Caco-2 (cell line): ENCODE measurements at regions of chr13 and their contacts with region 1.

Region 1: DNA sequence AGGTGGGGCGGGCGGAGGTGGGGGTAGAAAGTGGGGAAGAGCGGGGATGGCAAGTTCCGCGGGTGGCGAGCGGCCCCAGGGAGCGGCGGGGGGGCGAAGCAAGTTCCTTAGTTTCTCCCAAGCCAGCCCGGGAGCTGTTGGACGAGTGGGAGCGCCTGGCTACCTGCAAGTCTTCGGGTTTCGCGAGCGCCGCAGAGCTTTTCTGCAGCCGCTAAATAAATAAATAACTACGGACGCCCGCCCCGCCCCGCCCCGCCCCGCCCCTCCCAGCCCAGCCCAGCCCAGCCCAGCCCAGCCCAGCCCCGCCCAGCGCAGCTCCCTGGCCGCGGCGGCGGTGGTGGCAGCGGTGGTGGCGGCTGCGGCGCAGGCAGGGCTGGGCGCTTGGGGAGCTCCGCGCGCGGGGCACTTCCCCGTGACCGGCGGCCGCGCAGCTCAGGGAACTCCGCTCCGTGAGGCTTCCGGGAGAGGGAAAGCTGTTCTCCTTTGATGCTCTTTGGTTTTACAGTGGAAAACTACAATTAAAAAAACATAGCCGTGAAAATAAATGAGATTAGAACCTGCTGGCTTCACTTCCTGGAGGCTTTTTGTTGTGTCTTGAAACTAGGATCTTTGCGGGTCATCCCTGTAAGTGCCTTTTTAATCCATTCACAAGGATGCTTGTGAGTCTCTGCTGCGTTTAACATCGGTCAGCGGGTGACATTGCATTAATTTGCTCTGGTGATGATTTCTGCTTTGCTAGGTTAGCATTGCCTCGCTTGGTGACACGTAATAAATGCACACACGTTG is at the start of gene UBE2L5:
- DNase-seq: peak; percentile 88
- H3K4me3 ChIP-seq: peak within 1 kb of the TSS; percentile 58
- H3K4me3 Mint-ChIP-seq: peak within 1 kb of the TSS; percentile 72
- H3K27ac Mint-ChIP-seq: peak within 1 kb of the TSS; percentile 16
- H3K4me1 ChIP-seq: peaks cover 7% of the 10 kb centered on the region; the same call in 1 of the 2 replicates
- H3K4me1 Mint-ChIP-seq: peaks cover 8% of the 10 kb centered on the region
- H3K27me3 ChIP-seq: no peaks in the 10 kb centered on the region
- H3K27me3 Mint-ChIP-seq: no peaks in the 10 kb centered on the region
- CTCF ChIP-seq: no peak
- total RNA-seq, gene UBE2L5: not detected in 2 replicates

Region 2: GRCh38 chr13:30395192-30396084 is 26.8 kb before region 1 on chr13:
- CTCF ChIA-PET with region 1: no interaction called
- POLR2A ChIA-PET with region 1: interaction called, 5 read pairs
- intact Hi-C with region 1: loop called (anchors 1 kb)
- DNase-seq: peak; percentile 89 to 94
- H3K4me3 ChIP-seq: peak overlapping the region; percentile 45
- H3K4me3 Mint-ChIP-seq: peak overlapping the region; percentile 93
- H3K27ac Mint-ChIP-seq: peak overlapping the region; percentile 92
- H3K4me1 ChIP-seq: peaks cover 10% of the 10 kb centered on the region
- H3K4me1 Mint-ChIP-seq: no peaks in the 10 kb centered on the region
- H3K27me3 ChIP-seq: no peaks in the 10 kb centered on the region
- H3K27me3 Mint-ChIP-seq: no peaks in the 10 kb centered on the region
- CTCF ChIP-seq: no peak

Region 3: GRCh38 chr13:30408319-30409101 is 13.7 kb before region 1 on chr13:
- CTCF ChIA-PET with region 1: no interaction called
- POLR2A ChIA-PET with region 1: interaction called, 3 read pairs
- intact Hi-C with region 1: loop called (anchors 1 kb)
- DNase-seq: peak; percentile 95 to 96
- H3K4me3 ChIP-seq: peak overlapping the region; percentile 19
- H3K4me3 Mint-ChIP-seq: peak overlapping the region; percentile 62
- H3K27ac Mint-ChIP-seq: peak overlapping the region; percentile 46
- H3K4me1 ChIP-seq: 0 out of 2 replicates have a peak, but pooled peaks cover 5% of the 10 kb centered on the region
- H3K4me1 Mint-ChIP-seq: no peaks in the 10 kb centered on the region
- H3K27me3 ChIP-seq: no peaks in the 10 kb centered on the region
- H3K27me3 Mint-ChIP-seq: no peaks in the 10 kb centered on the region
- CTCF ChIP-seq: peak; percentile 76 to 82

Region 4: DNA sequence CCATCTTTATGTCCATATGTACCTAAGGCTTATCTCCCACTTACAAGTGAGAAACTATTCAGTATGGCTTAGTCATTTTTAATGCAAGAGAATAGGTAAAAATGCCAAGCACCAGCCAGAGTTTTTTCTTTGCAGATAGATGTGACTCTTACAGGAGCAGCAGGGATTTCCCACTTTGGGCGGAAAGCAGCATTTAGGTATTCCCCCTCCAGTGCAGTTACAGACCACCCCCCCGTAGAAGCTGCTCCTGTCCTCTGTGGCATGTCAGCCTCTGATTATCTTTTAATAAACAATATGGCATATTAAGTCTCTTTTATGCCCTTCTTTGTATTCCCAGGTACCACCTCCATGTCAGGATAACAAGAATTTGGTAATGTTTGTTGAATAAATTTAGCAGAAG is 170.8 kb after region 1 on chr13:
- CTCF ChIA-PET with region 1: no interaction called
- POLR2A ChIA-PET with region 1: no interaction called
- intact Hi-C with region 1: no loop called
- DNase-seq: no peak
- H3K4me3 ChIP-seq: no peak overlapping the region
- H3K4me3 Mint-ChIP-seq: no peak overlapping the region
- H3K27ac Mint-ChIP-seq: no peak overlapping the region
- H3K4me1 ChIP-seq: no peaks in the 10 kb centered on the region
- H3K4me1 Mint-ChIP-seq: no peaks in the 10 kb centered on the region
- H3K27me3 ChIP-seq: no peaks in the 10 kb centered on the region
- H3K27me3 Mint-ChIP-seq: no peaks in the 10 kb centered on the region
- CTCF ChIP-seq: no peak

Region 5: GRCh38 chr13:30617315-30618185 is 195.3 kb after region 1 on chr13 and contains the start of gene USPL1:
- CTCF ChIA-PET with region 1: no interaction called
- POLR2A ChIA-PET with region 1: interaction called, 3 read pairs
- intact Hi-C with region 1: loop called (anchors 5 kb)
- DNase-seq: peak; percentile 99
- H3K4me3 ChIP-seq: peak within 1 kb of the TSS; percentile 61
- H3K4me3 Mint-ChIP-seq: no peak within 1 kb of the TSS
- H3K27ac Mint-ChIP-seq: no peak within 1 kb of the TSS
- H3K4me1 ChIP-seq: 0 out of 2 replicates have a peak, but pooled peaks cover 8% of the 10 kb centered on the region
- H3K4me1 Mint-ChIP-seq: no peaks in the 10 kb centered on the region
- H3K27me3 ChIP-seq: no peaks in the 10 kb centered on the region
- H3K27me3 Mint-ChIP-seq: no peaks in the 10 kb centered on the region
- CTCF ChIP-seq: no peak
- total RNA-seq, gene USPL1: 23.4 and 26.7 TPM in 2 replicates

Region 6: GRCh38 chr13:30905932-30906383 is 483.7 kb after region 1 on chr13 and contains the start of gene MEDAG:
- CTCF ChIA-PET with region 1: no interaction called
- POLR2A ChIA-PET with region 1: no interaction called
- intact Hi-C with region 1: no loop called
- DNase-seq: no peak
- H3K4me3 ChIP-seq: no peak within 1 kb of the TSS
- H3K4me3 Mint-ChIP-seq: no peak within 1 kb of the TSS
- H3K27ac Mint-ChIP-seq: no peak within 1 kb of the TSS
- H3K4me1 ChIP-seq: no peaks in the 10 kb centered on the region
- H3K4me1 Mint-ChIP-seq: no peaks in the 10 kb centered on the region
- H3K27me3 ChIP-seq: no peaks in the 10 kb centered on the region; the same call in 1 of the 2 replicates
- H3K27me3 Mint-ChIP-seq: peaks cover 11% of the 10 kb centered on the region
- CTCF ChIP-seq: no peak
- total RNA-seq, gene MEDAG: not detected in 2 replicates